CD8-positive, alpha-beta T cell (primary cell): ENCODE measurements at regions of chr4 and their contacts with region 1.

Region 1: DNA sequence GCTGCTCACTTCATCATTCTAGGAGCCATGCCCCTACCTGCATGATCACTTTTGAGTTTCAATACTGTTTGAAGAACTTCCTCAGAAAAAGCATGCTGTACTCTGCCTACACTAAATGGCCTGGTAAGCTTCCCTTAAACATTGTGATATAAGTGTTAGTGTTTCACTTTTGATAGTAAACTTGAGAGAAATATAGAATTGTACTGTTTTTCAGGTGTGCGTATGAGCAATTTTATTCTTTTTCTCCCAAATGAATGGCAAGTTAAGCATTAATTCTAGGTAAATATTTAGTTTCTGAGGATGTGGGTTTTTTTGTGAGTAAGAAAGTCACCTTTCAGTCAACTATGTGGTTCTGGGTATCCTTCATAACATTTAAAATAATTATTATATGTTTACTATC is 484.5 kb downstream of the IL15 start:
- DNase-seq: no peak
- ATAC-seq: no peak
- H3K4me3 ChIP-seq: no peak overlapping the region
- H3K4me3 Mint-ChIP-seq: no peak overlapping the region
- H3K27ac ChIP-seq: no peak overlapping the region
- H3K27ac Mint-ChIP-seq: no peak overlapping the region
- H3K4me1 ChIP-seq: no peaks in the 10 kb centered on the region
- H3K4me1 Mint-ChIP-seq: peaks cover 4% of the 10 kb centered on the region
- H3K27me3 ChIP-seq: no peaks in the 10 kb centered on the region
- H3K27me3 Mint-ChIP-seq: no peaks in the 10 kb centered on the region
- CTCF ChIP-seq: no peak

Region 2: GRCh38 chr4:142036795-142037583 is 83.9 kb before region 1 on chr4:
- CTCF ChIA-PET with region 1: no interaction called
- POLR2A ChIA-PET with region 1: no interaction called
- intact Hi-C with region 1: no loop called
- DNase-seq: no peak
- ATAC-seq: no peak
- H3K4me3 ChIP-seq: no peak overlapping the region
- H3K4me3 Mint-ChIP-seq: no peak overlapping the region
- H3K27ac ChIP-seq: no peak overlapping the region
- H3K27ac Mint-ChIP-seq: no peak overlapping the region
- H3K4me1 ChIP-seq: no peaks in the 10 kb centered on the region
- H3K4me1 Mint-ChIP-seq: peaks cover 10% of the 10 kb centered on the region
- H3K27me3 ChIP-seq: no peaks in the 10 kb centered on the region
- H3K27me3 Mint-ChIP-seq: no peaks in the 10 kb centered on the region
- CTCF ChIP-seq: no peak

Region 3: GRCh38 chr4:142065086-142065647 is 55.8 kb before region 1 on chr4:
- CTCF ChIA-PET with region 1: no interaction called
- POLR2A ChIA-PET with region 1: no interaction called
- intact Hi-C with region 1: loop called in 1 of 2 experiments (anchors 2 kb)
- DNase-seq: no peak
- ATAC-seq: no peak
- H3K4me3 ChIP-seq: no peak overlapping the region
- H3K4me3 Mint-ChIP-seq: no peak overlapping the region
- H3K27ac ChIP-seq: no peak overlapping the region
- H3K27ac Mint-ChIP-seq: no peak overlapping the region
- H3K4me1 ChIP-seq: no peaks in the 10 kb centered on the region
- H3K4me1 Mint-ChIP-seq: peaks cover 10% of the 10 kb centered on the region
- H3K27me3 ChIP-seq: no peaks in the 10 kb centered on the region
- H3K27me3 Mint-ChIP-seq: no peaks in the 10 kb centered on the region
- CTCF ChIP-seq: no peak

Region 4: GRCh38 chr4:142160509-142160908 is 39.6 kb after region 1 on chr4:
- CTCF ChIA-PET with region 1: no interaction called
- POLR2A ChIA-PET with region 1: no interaction called
- intact Hi-C with region 1: no loop called
- DNase-seq: no peak
- ATAC-seq: no peak
- H3K4me3 ChIP-seq: no peak overlapping the region
- H3K4me3 Mint-ChIP-seq: no peak overlapping the region
- H3K27ac ChIP-seq: no peak overlapping the region
- H3K27ac Mint-ChIP-seq: no peak overlapping the region
- H3K4me1 ChIP-seq: no peaks in the 10 kb centered on the region
- H3K4me1 Mint-ChIP-seq: peaks cover 2% of the 10 kb centered on the region
- H3K27me3 ChIP-seq: no peaks in the 10 kb centered on the region
- H3K27me3 Mint-ChIP-seq: no peaks in the 10 kb centered on the region
- CTCF ChIP-seq: no peak